A549 (cell line): ENCODE measurements at regions of chr14 and their contacts with region 1.

Region 1: GRCh38 chr14:23555882-23556699 is at the start of gene THTPA:
- DNase-seq: peak; percentile 91 to 95
- ATAC-seq: peak; percentile 86 to 90
- H3K4me3 ChIP-seq: peak within 1 kb of the TSS; percentile 93
- H3K27ac ChIP-seq: peak within 1 kb of the TSS; percentile 98 to 100
- H3K4me1 ChIP-seq: peaks cover 16% of the 10 kb centered on the region; the same call in 2 of the 3 replicates
- CTCF ChIP-seq: no peak
- EP300 ChIP-seq: no peak
- POLR2A ChIP-seq: peak; percentile 75
- RAD21 ChIP-seq: no peak
- polyA plus RNA-seq, gene THTPA: 8.1 and 15.3 TPM in 2 replicates

Region 2: GRCh38 chr14:23478111-23478759 is 77.9 kb before region 1 on chr14:
- CTCF ChIA-PET with region 1: interaction called, 553 read pairs
- POLR2A ChIA-PET with region 1: interaction called, 11 read pairs
- DNase-seq: peak; percentile 54 to 71
- ATAC-seq: peak; percentile 70 to 72; a peak in 4 of 6 replicates
- H3K4me3 ChIP-seq: no peak overlapping the region
- H3K27ac ChIP-seq: no peak overlapping the region
- H3K4me1 ChIP-seq: no peaks in the 10 kb centered on the region
- CTCF ChIP-seq: peak; percentile 77
- EP300 ChIP-seq: no peak
- POLR2A ChIP-seq: no peak
- RAD21 ChIP-seq: peak; percentile 74 to 75

Region 3: GRCh38 chr14:23521785-23522640 is 34.1 kb before region 1 on chr14:
- CTCF ChIA-PET with region 1: interaction called, 13 read pairs
- POLR2A ChIA-PET with region 1: no interaction called
- DNase-seq: no peak
- ATAC-seq: no peak
- H3K4me3 ChIP-seq: no peak overlapping the region
- H3K27ac ChIP-seq: no peak overlapping the region
- H3K4me1 ChIP-seq: no peaks in the 10 kb centered on the region
- CTCF ChIP-seq: no peak
- EP300 ChIP-seq: no peak
- POLR2A ChIP-seq: no peak
- RAD21 ChIP-seq: no peak

Region 4: DNA sequence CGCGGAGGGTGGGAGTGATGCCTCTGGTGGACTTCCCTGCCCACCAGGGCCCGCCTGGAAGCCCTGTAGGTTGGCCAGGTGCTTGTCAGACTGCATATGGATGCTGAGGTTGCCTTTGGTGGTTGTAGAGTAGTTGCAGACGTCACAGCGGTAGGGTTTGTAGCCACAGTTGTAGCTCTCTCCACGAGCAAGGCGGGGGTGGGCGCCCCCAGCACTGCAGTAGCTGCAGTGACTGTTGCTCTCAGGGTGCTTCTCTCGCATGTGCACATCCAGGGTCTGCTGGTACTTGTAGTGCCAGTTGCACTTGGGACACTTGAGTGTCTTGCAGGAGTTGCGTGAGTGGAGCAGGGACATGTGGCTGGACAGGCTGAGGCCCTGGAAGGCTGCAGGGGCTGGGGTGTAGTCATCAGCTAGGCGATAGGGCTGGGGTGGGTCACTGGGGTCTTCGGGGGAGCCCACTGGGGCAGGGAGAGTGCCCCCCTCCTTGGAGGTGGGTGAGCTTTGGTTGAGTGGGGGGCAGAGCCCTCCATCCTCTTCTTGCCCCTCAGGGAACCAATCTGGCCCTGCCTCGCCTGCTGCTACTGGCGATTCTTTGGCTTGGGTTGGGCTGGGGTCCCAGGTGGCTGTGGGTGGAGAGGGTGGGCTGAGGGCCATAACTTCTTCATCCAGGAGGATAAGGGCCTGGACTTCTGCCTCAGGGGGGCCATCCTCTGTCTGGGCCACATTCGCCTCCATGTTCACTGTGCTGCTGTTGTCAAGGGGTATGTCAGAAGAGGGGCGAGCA is 22.2 kb before region 1 on chr14:
- CTCF ChIA-PET with region 1: interaction called, 48 read pairs
- POLR2A ChIA-PET with region 1: no interaction called
- DNase-seq: no peak
- ATAC-seq: no peak
- H3K4me3 ChIP-seq: no peak overlapping the region
- H3K27ac ChIP-seq: no peak overlapping the region
- H3K4me1 ChIP-seq: no peaks in the 10 kb centered on the region
- CTCF ChIP-seq: no peak
- EP300 ChIP-seq: no peak
- POLR2A ChIP-seq: no peak
- RAD21 ChIP-seq: no peak

Region 5: DNA sequence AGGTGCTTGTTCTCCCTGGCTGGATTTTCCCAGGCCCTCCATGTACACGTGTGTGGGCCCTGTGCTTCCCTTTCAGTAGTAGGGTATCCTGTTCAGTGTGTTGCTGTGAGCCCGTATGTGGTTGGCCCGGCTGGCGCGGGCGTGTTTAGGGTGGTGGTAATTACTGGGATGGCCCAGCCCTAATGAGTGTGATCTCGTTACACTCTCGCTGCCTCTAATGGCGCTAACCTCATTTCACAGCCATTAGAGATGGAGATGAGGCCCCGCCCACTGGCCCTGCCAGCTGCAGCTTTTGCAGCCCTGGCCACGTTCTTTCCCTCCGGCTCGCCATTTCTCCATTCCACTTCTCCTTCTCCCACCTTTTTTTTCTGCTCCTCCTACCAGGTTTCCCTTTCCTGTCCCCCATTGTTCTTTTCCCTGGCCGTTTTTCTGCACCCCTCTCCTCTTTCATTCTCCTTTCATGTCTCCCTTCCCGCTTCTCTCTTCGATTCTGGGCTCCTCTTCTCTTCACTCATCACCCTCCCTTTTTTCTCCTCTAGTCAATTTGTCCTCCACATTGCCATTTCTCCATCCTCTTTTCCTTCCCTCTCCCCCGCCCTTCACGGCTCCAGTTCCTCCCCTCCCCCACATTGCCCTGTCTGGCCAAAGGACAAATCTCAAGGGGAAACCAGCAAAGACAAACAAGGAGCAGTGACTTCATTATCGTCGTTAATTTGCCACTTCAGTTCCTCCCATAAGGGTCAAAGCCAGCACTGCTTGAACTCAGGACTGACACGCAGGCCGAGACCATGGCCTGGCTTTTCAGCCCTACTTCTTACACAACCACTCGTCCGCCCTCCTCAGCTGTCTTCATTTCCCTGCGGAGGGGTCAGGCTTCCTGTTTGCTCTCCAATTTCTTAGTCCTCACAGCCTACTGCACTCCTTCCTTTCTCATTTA is 11.3 kb before region 1 on chr14:
- CTCF ChIA-PET with region 1: interaction called, 48 read pairs
- POLR2A ChIA-PET with region 1: interaction called, 5 read pairs
- DNase-seq: no peak
- ATAC-seq: no peak
- H3K4me3 ChIP-seq: no peak overlapping the region
- H3K27ac ChIP-seq: no peak overlapping the region
- H3K4me1 ChIP-seq: no peaks in the 10 kb centered on the region
- CTCF ChIP-seq: no peak
- EP300 ChIP-seq: no peak
- POLR2A ChIP-seq: no peak
- RAD21 ChIP-seq: no peak

Region 6: GRCh38 chr14:23638414-23639047 is 82.4 kb after region 1 on chr14:
- CTCF ChIA-PET with region 1: no interaction called
- POLR2A ChIA-PET with region 1: no interaction called
- DNase-seq: no peak
- ATAC-seq: no peak
- H3K4me3 ChIP-seq: no peak overlapping the region
- H3K27ac ChIP-seq: no peak overlapping the region
- H3K4me1 ChIP-seq: no peaks in the 10 kb centered on the region
- CTCF ChIP-seq: no peak
- EP300 ChIP-seq: no peak
- POLR2A ChIP-seq: no peak
- RAD21 ChIP-seq: no peak

Region 7: DNA sequence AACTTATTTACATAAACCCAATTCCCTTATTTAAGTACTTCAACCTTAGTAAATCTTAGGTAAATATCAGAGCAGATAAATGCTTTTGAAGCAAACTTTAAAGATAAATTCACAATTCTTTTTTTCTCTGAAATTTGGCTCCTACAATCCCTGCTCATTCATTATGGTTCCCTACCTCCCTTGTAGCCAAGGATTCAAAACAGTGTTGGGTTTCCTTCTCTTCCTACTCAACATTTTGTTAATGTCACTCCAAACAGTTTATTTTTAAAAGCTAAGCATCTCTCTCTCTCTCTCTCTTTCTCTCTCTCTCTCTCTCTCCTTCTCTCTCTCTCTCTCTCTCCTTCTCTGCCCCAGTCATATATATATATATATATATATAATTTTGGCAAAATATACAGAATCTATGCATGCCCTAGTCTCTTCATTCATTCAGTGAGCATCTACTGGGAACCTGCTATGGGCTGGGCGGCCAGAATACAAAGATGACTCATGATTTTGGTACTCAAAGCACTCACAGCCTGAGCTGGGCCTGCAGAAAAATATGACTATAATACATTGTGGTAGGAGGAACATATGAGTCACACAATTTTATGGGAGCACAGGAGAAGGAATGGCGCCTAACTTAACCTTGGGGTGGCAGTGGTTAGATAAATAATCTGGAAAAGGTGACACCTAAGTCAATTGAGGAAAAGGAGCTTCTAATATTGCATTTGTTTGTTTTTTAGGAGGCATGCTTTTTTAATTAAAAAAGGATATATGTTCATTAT is 273.8 kb after region 1 on chr14:
- CTCF ChIA-PET with region 1: no interaction called
- POLR2A ChIA-PET with region 1: no interaction called
- DNase-seq: peak; percentile 77 to 89
- ATAC-seq: peak; percentile 99
- H3K4me3 ChIP-seq: no peak overlapping the region
- H3K27ac ChIP-seq: peak overlapping the region; percentile 61 to 85
- H3K4me1 ChIP-seq: peaks cover 31% of the 10 kb centered on the region
- CTCF ChIP-seq: no peak
- EP300 ChIP-seq: no peak
- POLR2A ChIP-seq: no peak
- RAD21 ChIP-seq: peak in 1 of 2 experiments; percentile 13; a peak in 1 of 5 replicates